ENCODE measurements at regions of chr2 and their contacts with region 1.

Region 1: GRCh38 chr2:105114551-105114950 is 76.7 kb downstream of the MRPS9 start:
- DNase-seq: peak; percentile 74
- H3K4me3 ChIP-seq: no peak overlapping the region
- H3K27ac ChIP-seq: no peak overlapping the region
- H3K4me1 ChIP-seq: no peaks in the 10 kb centered on the region
- H3K27me3 ChIP-seq: no peaks in the 10 kb centered on the region

Region 2: GRCh38 chr2:105231232-105231619 is 116.7 kb after region 1 on chr2:
- in situ Hi-C with region 1: loop called (anchors 5 kb)
- DNase-seq: no peak
- H3K4me3 ChIP-seq: no peak overlapping the region
- H3K27ac ChIP-seq: no peak overlapping the region
- H3K4me1 ChIP-seq: no peaks in the 10 kb centered on the region
- H3K27me3 ChIP-seq: peaks cover 33% of the 10 kb centered on the region; the same call in 1 of the 2 replicates

Region 3: GRCh38 chr2:105294844-105295481 is 180.4 kb after region 1 on chr2:
- in situ Hi-C with region 1: loop called (anchors 10 kb)
- DNase-seq: peak; percentile 77
- H3K4me3 ChIP-seq: no peak overlapping the region
- H3K27ac ChIP-seq: no peak overlapping the region
- H3K4me1 ChIP-seq: no peaks in the 10 kb centered on the region
- H3K27me3 ChIP-seq: no peaks in the 10 kb centered on the region

Region 4: GRCh38 chr2:105545730-105546627 is 431.4 kb after region 1 on chr2:
- in situ Hi-C with region 1: loop called (anchors 25 kb)
- DNase-seq: peak; percentile 74
- H3K4me3 ChIP-seq: no peak overlapping the region
- H3K27ac ChIP-seq: no peak overlapping the region
- H3K4me1 ChIP-seq: no peaks in the 10 kb centered on the region
- H3K27me3 ChIP-seq: peaks cover 30% of the 10 kb centered on the region; the same call in 1 of the 2 replicates